ENCODE measurements at regions of chrX and their contacts with region 1.

Region 1: DNA sequence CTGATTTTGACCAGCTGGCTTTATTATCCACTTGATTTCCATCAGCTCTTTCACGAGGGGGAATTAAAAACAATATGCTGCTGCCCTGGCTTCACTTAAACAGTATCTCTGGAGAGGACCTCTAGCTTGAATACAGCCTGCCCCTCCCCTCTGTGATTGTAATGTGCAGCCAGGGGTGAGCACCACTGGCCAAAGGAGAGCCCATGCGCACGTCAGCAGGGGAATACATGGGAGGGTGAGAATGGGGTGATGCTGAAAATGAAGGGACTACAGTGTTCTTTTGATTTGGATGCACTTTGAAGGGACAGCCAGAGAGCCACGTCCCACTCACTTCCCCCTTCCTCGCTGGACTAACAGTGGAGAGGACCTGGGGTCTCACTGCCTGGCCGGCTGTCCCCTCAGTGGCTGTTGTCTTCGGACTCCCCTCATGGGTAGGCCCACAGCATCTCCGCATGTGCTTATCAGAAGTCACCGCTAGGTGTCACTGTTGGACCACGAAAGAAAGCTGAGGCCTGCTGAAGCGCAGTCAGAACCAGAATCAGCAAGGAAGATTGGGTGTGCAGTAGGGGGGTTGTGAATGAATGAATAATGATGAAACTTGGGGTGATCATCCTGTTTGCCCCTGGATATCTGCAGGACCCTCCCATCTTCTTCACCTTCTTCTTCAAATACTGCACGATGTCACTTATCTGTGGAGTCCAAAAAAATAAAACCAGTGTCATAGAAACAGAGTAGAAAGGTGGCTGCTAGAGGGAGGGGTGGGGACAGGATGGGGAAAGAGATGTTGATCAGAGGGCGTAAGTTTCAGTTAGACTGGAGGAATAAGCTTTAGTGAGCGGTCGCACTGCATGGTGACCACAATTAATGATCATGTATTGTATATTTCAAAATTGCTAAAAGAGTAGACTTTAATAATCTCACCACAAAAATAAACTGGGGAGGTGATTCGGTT is 32.8 kb downstream of the CLCN4 start:
- DNase-seq: peak; percentile 72
- H3K4me3 ChIP-seq: no peak overlapping the region
- H3K27ac ChIP-seq: no peak overlapping the region
- H3K4me1 ChIP-seq: no peaks in the 10 kb centered on the region; a peak in 1 of 4 replicates
- H3K27me3 ChIP-seq: peaks cover 21% of the 10 kb centered on the region; the same call in 1 of the 2 replicates
- CTCF ChIP-seq: peak; percentile 82
- EP300 ChIP-seq: no peak
- RAD21 ChIP-seq: peak; percentile 94

Region 2: DNA sequence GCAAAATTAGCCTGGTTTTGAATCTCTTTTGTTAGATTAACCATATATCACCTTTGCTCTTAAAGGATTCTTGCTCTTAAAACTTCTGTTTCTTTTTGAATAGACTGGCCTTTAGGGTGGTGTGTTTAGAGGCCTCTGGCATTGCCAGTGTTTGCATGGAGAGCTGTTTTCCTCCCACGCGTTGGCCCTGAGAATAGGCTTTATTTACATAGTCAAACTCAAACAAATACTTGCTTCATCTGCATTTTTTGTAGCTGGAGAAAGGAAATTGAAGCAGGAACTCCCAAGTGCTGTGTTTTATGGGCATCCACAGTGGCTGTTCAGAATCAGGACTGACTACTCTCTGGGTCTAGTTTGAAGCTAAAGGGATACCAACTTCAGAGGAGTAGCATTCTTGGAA is 400.7 kb before region 1 on chrX:
- CTCF ChIA-PET with region 1: no interaction called
- POLR2A ChIA-PET with region 1: no interaction called
- DNase-seq: no peak
- H3K4me3 ChIP-seq: no peak overlapping the region
- H3K27ac ChIP-seq: no peak overlapping the region
- H3K4me1 ChIP-seq: no peaks in the 10 kb centered on the region; a peak in 1 of 4 replicates
- H3K27me3 ChIP-seq: peaks cover 32% of the 10 kb centered on the region
- CTCF ChIP-seq: no peak
- EP300 ChIP-seq: no peak
- RAD21 ChIP-seq: no peak

Region 3: DNA sequence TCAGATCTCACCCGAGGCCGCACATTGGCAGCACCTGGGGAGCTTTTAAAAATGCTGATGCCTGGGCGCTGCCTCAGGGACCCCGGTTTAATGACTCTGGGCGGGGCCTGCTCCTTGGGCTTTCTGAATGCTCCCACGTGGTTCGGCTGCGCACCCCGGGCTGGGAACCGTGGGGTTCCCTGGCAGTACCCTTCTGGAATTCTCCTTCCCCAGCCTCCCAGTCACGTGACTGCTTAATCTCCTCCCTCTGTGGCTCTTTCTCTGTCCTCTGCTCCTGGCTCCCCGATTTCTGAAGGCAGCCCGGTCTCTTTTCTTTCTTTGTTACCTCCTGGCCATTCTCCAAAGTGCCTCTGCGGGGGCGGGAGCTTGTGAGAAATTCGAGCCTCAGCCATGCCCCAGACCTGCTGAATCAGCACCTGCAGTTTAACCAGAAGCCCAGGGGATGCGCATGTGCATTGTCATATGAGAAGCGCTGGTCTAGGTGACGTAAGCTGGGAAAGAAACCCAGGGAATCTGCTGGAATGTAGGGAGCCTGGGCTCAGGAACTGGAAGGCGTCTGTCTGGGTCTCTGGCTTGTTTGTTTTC is 16.2 kb before region 1 on chrX:
- CTCF ChIA-PET with region 1: interaction called, 70 read pairs
- POLR2A ChIA-PET with region 1: no interaction called
- DNase-seq: no peak
- H3K4me3 ChIP-seq: no peak overlapping the region
- H3K27ac ChIP-seq: no peak overlapping the region
- H3K4me1 ChIP-seq: peaks cover 0 to 8% of the 10 kb centered on the region in 2 experiments; a peak in 2 of 4 replicates
- H3K27me3 ChIP-seq: peaks cover 16% of the 10 kb centered on the region; the same call in 1 of the 2 replicates
- CTCF ChIP-seq: no peak
- EP300 ChIP-seq: no peak
- RAD21 ChIP-seq: no peak

Region 4: GRCh38 chrX:10244915-10245622 is 55.5 kb after region 1 on chrX:
- CTCF ChIA-PET with region 1: interaction called, 11 read pairs
- POLR2A ChIA-PET with region 1: no interaction called
- DNase-seq: no peak
- H3K4me3 ChIP-seq: no peak overlapping the region
- H3K27ac ChIP-seq: no peak overlapping the region
- H3K4me1 ChIP-seq: peaks cover 0 to 7% of the 10 kb centered on the region in 2 experiments; a peak in 1 of 4 replicates
- H3K27me3 ChIP-seq: no peaks in the 10 kb centered on the region
- CTCF ChIP-seq: no peak
- EP300 ChIP-seq: no peak
- RAD21 ChIP-seq: no peak

Region 5: DNA sequence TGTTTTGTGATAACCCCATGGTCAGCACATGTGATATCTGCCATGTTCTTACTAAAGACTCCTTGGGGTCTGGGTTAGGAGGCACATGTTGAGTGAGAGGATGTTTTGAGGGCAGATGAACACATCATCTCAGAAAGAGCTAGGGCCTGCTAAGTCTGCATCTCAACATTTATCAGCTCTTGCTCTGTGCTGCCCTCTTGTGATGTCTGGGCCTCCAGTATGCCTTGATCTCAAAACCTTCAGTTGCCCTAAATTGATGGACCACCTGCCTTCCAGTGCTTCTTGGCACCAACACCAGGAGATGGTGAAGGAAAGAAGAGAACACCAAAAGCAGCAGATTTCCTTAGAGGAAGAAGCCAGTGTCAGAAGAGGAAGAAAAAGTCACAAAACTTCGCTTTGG is 408.3 kb after region 1 on chrX:
- CTCF ChIA-PET with region 1: interaction called, 19 read pairs
- POLR2A ChIA-PET with region 1: no interaction called
- DNase-seq: no peak
- H3K4me3 ChIP-seq: no peak overlapping the region
- H3K27ac ChIP-seq: no peak overlapping the region
- H3K4me1 ChIP-seq: no peaks in the 10 kb centered on the region; a peak in 1 of 4 replicates
- H3K27me3 ChIP-seq: no peaks in the 10 kb centered on the region
- CTCF ChIP-seq: peak; percentile 67
- EP300 ChIP-seq: no peak
- RAD21 ChIP-seq: peak; percentile 62

Region 6: DNA sequence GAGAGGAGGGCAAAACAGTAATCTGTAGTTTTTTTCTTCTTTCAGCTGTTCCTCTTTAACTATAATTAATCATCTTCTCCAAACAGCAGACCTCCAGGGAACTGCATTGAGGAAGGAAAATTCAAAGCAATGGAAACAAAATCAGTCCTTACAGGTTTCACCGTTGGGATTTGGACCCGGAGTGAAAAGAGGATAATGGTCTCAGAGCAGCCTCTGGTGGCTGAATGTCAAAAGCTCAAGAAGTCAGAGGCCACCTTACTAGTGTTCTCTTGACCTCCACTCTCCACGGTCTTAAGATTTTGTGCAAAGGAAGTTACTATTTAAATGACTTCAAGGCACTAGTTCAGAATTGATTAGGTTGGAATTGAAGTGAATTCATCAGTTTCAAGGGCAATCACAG is 446.7 kb after region 1 on chrX:
- CTCF ChIA-PET with region 1: interaction called, 50 read pairs
- POLR2A ChIA-PET with region 1: no interaction called
- DNase-seq: peak; percentile 39
- H3K4me3 ChIP-seq: no peak overlapping the region
- H3K27ac ChIP-seq: peak overlapping the region; percentile 47 to 88; a peak in 3 of 4 replicates
- H3K4me1 ChIP-seq: peaks cover 0 to 10% of the 10 kb centered on the region in 2 experiments; a peak in 3 of 4 replicates
- H3K27me3 ChIP-seq: no peaks in the 10 kb centered on the region
- CTCF ChIP-seq: peak; percentile 78
- EP300 ChIP-seq: no peak
- RAD21 ChIP-seq: peak; percentile 88

Region 7: GRCh38 chrX:10722851-10723250 is 533.3 kb after region 1 on chrX:
- CTCF ChIA-PET with region 1: interaction called, 63 read pairs
- POLR2A ChIA-PET with region 1: no interaction called
- DNase-seq: peak; percentile 65
- H3K4me3 ChIP-seq: no peak overlapping the region
- H3K27ac ChIP-seq: no peak overlapping the region
- H3K4me1 ChIP-seq: no peaks in the 10 kb centered on the region
- H3K27me3 ChIP-seq: no peaks in the 10 kb centered on the region
- CTCF ChIP-seq: peak; percentile 90
- EP300 ChIP-seq: no peak
- RAD21 ChIP-seq: peak; percentile 80

Region 8: DNA sequence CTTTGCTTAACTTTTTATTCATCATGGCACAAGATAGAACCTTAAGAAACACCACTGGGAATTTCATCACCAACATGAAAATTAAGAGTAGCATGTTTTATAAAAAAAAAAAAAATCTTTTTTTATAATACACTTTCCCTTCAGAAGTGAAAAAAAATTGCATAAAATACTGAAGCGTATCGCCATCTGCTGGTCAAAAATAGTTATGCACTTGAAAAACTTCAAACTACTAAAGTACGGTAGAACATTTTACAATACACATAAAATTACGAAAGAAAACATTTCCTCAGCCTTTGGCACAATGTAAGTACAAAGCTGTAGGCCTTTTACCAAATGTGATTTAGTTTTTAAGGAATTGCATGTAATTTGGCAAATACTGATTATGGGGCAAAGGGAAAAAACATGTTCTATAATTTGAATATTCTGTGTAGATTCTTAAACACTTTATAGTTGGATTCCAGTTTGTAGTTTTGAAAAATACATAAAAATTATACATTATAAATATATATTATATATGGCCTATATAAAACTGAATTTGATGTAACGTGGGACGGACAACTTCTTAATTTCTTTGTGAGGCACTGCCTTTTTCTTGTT is 948.0 kb after region 1 on chrX:
- CTCF ChIA-PET with region 1: interaction called, 80 read pairs
- POLR2A ChIA-PET with region 1: no interaction called
- DNase-seq: peak; percentile 39
- H3K4me3 ChIP-seq: no peak overlapping the region
- H3K27ac ChIP-seq: no peak overlapping the region
- H3K4me1 ChIP-seq: peaks cover 0 to 3% of the 10 kb centered on the region in 2 experiments; a peak in 1 of 4 replicates
- H3K27me3 ChIP-seq: no peaks in the 10 kb centered on the region; the same call in 1 of the 2 replicates
- CTCF ChIP-seq: peak; percentile 84
- EP300 ChIP-seq: no peak
- RAD21 ChIP-seq: peak; percentile 57